ENCODE measurements at regions of chr11 and their contacts with region 1.

Region 1: GRCh38 chr11:7665473-7666291 is 7.6 kb downstream of the CYB5R2 start:
- DNase-seq: peak; percentile 81
- H3K4me3 Mint-ChIP-seq: no peak overlapping the region
- H3K27ac Mint-ChIP-seq: no peak overlapping the region
- H3K4me1 Mint-ChIP-seq: no peaks in the 10 kb centered on the region
- H3K27me3 Mint-ChIP-seq: no peaks in the 10 kb centered on the region
- CTCF ChIP-seq: peak; percentile 97

Region 2: DNA sequence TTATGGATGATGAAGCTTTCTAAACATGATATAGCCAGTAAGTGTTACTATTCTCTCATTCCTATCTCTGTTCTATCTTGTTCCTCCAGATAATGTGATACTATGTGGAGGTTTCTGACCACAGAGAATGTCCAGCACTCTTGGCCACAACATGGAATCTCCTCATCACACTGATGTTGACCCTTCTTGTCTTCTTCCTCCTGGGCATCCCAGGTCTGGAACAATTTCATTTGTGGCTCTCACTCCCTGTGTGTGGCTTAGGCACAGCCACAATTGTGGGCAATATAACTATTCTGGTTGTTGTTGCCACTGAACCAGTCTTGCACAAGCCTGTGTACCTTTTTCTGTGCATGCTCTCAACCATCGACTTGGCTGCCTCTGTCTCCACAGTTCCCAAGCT is 1939.3 kb before region 1 on chr11:
- CTCF ChIA-PET with region 1: no interaction called
- POLR2A ChIA-PET with region 1: no interaction called
- intact Hi-C with region 1: no loop called
- DNase-seq: no peak
- H3K4me3 Mint-ChIP-seq: no peak overlapping the region
- H3K27ac Mint-ChIP-seq: no peak overlapping the region
- H3K4me1 Mint-ChIP-seq: no peaks in the 10 kb centered on the region
- H3K27me3 Mint-ChIP-seq: peaks cover 65% of the 10 kb centered on the region
- CTCF ChIP-seq: no peak

Region 3: GRCh38 chr11:7098235-7098832 is 567.3 kb before region 1 on chr11:
- CTCF ChIA-PET with region 1: interaction called, 27 read pairs
- POLR2A ChIA-PET with region 1: no interaction called
- intact Hi-C with region 1: loop called (anchors 1 kb)
- DNase-seq: peak; percentile 63
- H3K4me3 Mint-ChIP-seq: no peak overlapping the region
- H3K27ac Mint-ChIP-seq: no peak overlapping the region
- H3K4me1 Mint-ChIP-seq: no peaks in the 10 kb centered on the region
- H3K27me3 Mint-ChIP-seq: peaks cover 84% of the 10 kb centered on the region
- CTCF ChIP-seq: peak; percentile 73

Region 4: GRCh38 chr11:7513234-7514098 is 152.2 kb before region 1 on chr11 and contains the start of gene PPFIBP2:
- CTCF ChIA-PET with region 1: interaction called, 6 read pairs
- POLR2A ChIA-PET with region 1: interaction called, 5 read pairs
- intact Hi-C with region 1: loop called (anchors 1 kb)
- DNase-seq: peak; percentile 70
- H3K4me3 Mint-ChIP-seq: peak within 1 kb of the TSS; percentile 83
- H3K27ac Mint-ChIP-seq: peak within 1 kb of the TSS; percentile 52
- H3K4me1 Mint-ChIP-seq: no peaks in the 10 kb centered on the region
- H3K27me3 Mint-ChIP-seq: peaks cover 17% of the 10 kb centered on the region
- CTCF ChIP-seq: peak; percentile 74
- total RNA-seq, gene PPFIBP2: 3.5 and 4.3 TPM in 2 replicates

Region 5: GRCh38 chr11:7536100-7536499 is 129.6 kb before region 1 on chr11:
- CTCF ChIA-PET with region 1: no interaction called
- POLR2A ChIA-PET with region 1: no interaction called
- intact Hi-C with region 1: no loop called
- DNase-seq: no peak
- H3K4me3 Mint-ChIP-seq: no peak overlapping the region
- H3K27ac Mint-ChIP-seq: no peak overlapping the region
- H3K4me1 Mint-ChIP-seq: peaks cover 6% of the 10 kb centered on the region
- H3K27me3 Mint-ChIP-seq: peaks cover 13% of the 10 kb centered on the region
- CTCF ChIP-seq: no peak

Region 6: DNA sequence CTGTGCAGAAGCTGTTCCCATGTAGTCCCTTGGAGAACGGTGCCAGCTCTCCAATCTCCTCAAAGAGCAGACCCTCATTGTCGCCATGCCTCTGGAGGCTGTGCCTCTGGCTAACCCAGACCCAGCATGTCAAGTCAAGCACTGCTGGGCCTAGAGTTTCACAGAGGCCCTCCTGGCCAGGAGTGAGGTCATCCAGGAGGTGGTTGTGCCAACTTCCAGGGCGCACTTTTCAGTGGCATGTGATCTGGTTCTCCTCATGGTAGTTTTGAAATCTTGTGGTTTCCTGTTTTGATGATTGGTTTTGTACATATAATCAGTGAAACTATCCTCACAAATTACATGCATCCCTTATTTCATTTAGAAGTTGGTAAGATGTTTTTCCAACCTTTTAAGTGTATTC is 73.0 kb before region 1 on chr11:
- CTCF ChIA-PET with region 1: interaction called, 13 read pairs
- POLR2A ChIA-PET with region 1: no interaction called
- intact Hi-C with region 1: no loop called
- DNase-seq: peak; percentile 95
- H3K4me3 Mint-ChIP-seq: no peak overlapping the region
- H3K27ac Mint-ChIP-seq: peak overlapping the region; percentile 79
- H3K4me1 Mint-ChIP-seq: peaks cover 38% of the 10 kb centered on the region
- H3K27me3 Mint-ChIP-seq: no peaks in the 10 kb centered on the region
- CTCF ChIP-seq: no peak

Region 7: DNA sequence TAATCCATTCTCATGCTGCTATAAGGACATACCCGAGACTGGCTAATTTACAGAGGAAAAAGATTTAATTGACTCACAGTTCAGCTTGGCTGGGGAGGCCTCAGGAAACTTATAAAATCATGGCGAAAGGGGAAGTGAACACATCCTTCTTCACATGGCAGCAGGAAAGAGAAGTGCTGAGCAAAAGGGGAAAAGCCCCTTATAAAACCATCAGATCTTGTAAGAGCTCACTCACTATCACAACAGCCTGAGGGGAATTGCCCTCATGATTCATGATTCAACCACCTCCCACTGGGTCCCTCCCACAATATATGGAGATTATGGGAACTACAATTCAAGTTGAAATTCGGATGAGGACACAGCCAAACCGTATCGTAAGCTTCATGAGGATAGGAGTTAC is 11.4 kb after region 1 on chr11:
- CTCF ChIA-PET with region 1: interaction called, 35 read pairs
- POLR2A ChIA-PET with region 1: interaction called, 3 read pairs
- intact Hi-C with region 1: no loop called
- DNase-seq: peak; percentile 95
- H3K4me3 Mint-ChIP-seq: peak overlapping the region; percentile 15
- H3K27ac Mint-ChIP-seq: peak overlapping the region; percentile 50
- H3K4me1 Mint-ChIP-seq: peaks cover 20% of the 10 kb centered on the region
- H3K27me3 Mint-ChIP-seq: no peaks in the 10 kb centered on the region
- CTCF ChIP-seq: no peak

Region 8: DNA sequence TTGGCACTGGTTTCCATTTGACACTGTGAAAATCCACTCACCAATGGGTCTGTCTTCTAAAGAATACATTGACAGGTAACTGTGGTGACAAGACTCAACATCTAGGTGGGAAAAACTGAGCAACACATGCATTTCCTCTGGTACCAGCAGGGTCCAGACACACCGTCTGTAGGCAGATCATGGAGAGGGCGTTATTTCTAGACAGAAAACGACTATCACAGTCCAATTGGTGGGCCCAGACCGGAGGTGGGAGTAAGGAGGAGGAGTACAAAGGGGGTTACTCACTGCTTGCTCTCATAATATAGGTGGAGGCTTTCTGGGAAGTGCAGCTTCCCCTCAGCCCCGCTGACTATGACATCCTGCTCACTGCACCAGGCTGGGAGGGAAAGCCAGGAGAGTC is 30.7 kb after region 1 on chr11:
- CTCF ChIA-PET with region 1: interaction called, 16 read pairs
- POLR2A ChIA-PET with region 1: no interaction called
- intact Hi-C with region 1: no loop called
- DNase-seq: no peak
- H3K4me3 Mint-ChIP-seq: no peak overlapping the region
- H3K27ac Mint-ChIP-seq: no peak overlapping the region
- H3K4me1 Mint-ChIP-seq: peaks cover 5% of the 10 kb centered on the region
- H3K27me3 Mint-ChIP-seq: peaks cover 41% of the 10 kb centered on the region
- CTCF ChIP-seq: no peak

Region 9: GRCh38 chr11:7833527-7833926 is 167.8 kb after region 1 on chr11:
- CTCF ChIA-PET with region 1: no interaction called
- POLR2A ChIA-PET with region 1: no interaction called
- intact Hi-C with region 1: no loop called
- DNase-seq: no peak
- H3K4me3 Mint-ChIP-seq: no peak overlapping the region
- H3K27ac Mint-ChIP-seq: no peak overlapping the region
- H3K4me1 Mint-ChIP-seq: no peaks in the 10 kb centered on the region
- H3K27me3 Mint-ChIP-seq: no peaks in the 10 kb centered on the region
- CTCF ChIP-seq: no peak

Measured in MCF 10A (cell line).